ENCODE measurements at regions of chr4 and their contacts with region 1.

Region 1: DNA sequence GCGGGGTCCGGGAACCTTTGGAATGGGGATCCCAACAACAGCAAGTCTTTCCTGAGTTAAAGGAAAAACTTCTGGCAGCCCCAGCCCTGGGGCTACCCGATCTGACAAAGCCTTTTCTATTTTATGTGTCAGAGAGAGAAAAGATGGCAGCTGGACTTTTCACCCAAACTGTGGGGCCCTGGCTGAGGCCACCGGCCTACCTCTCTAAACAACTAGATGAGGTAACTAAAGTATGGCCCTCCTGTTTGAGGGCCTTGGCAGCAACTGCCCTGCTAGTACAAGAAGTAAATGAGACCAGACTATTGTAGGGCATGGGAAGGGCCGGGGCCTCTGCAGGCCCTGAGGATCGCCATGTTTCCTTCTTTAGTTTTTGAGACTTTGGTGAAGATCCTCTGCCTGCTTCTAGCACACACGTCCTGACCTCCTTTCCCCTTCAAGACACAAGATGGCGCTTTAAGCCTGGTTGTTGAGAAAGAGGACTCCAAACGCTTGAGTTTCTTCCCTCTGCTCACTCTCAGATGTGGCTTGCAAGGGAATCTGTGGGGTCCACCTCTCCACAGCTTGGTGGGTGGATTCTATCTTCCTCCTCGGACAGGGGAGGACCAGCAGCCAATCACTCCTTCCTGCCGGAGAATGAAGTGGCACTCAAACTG is 18.5 kb upstream of the DRD5 start:
- DNase-seq: peak; percentile 71
- ATAC-seq: peak; percentile 78
- H3K4me3 ChIP-seq: no peak overlapping the region; a peak in 1 of 6 replicates
- H3K27ac ChIP-seq: no peak overlapping the region
- H3K4me1 ChIP-seq: peaks cover 5% of the 10 kb centered on the region; the same call in 1 of the 2 replicates
- H3K27me3 ChIP-seq: no peaks in the 10 kb centered on the region; a peak in 1 of 5 replicates
- CTCF ChIP-seq: peak; percentile 85
- EP300 ChIP-seq: no peak
- POLR2A ChIP-seq: no peak
- RAD21 ChIP-seq: peak; percentile 51

Region 2: DNA sequence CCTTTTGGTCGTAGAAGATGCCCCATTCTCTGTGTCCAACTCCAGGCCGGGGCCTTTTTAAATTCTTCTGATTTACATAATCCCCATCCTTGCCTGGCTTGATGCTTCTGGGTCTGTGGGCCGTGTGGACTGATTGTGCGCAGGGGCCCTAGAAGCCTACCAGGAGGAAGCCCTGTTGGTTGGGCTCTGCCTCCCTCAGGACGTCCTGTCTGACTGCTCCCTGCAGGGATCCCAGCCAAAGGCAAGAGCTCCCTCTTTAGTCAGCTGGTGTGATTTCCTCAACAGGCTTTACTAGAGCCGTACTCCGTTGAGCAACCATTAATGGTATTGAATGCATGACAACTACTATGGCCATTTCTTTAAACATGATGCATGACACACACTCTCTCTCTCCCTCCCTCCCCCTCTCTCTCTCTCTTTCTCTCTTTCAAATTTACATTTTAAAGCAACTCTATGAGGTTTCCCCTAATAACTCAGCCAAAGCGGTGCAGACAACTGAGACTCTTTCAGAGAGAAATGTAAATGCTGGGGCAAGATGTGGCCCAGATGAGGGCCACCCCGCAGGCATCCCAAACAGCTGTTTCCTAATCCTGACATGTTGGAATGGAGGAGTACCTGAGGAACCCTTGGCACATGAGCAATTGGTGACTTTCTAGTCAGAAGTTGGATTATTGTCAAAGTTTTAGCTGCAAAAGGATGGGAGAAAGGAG is 135.8 kb after region 1 on chr4:
- CTCF ChIA-PET with region 1: interaction called, 4 read pairs
- POLR2A ChIA-PET with region 1: no interaction called
- in situ Hi-C with region 1: no loop called
- intact Hi-C with region 1: loop called (anchors 2 kb)
- DNase-seq: peak; percentile 11
- ATAC-seq: peak; percentile 70
- H3K4me3 ChIP-seq: no peak overlapping the region
- H3K27ac ChIP-seq: no peak overlapping the region
- H3K4me1 ChIP-seq: no peaks in the 10 kb centered on the region
- H3K27me3 ChIP-seq: no peaks in the 10 kb centered on the region
- CTCF ChIP-seq: peak; percentile 25; the same call in 1 of the 2 replicates
- EP300 ChIP-seq: no peak
- POLR2A ChIP-seq: no peak
- RAD21 ChIP-seq: no peak

Region 3: DNA sequence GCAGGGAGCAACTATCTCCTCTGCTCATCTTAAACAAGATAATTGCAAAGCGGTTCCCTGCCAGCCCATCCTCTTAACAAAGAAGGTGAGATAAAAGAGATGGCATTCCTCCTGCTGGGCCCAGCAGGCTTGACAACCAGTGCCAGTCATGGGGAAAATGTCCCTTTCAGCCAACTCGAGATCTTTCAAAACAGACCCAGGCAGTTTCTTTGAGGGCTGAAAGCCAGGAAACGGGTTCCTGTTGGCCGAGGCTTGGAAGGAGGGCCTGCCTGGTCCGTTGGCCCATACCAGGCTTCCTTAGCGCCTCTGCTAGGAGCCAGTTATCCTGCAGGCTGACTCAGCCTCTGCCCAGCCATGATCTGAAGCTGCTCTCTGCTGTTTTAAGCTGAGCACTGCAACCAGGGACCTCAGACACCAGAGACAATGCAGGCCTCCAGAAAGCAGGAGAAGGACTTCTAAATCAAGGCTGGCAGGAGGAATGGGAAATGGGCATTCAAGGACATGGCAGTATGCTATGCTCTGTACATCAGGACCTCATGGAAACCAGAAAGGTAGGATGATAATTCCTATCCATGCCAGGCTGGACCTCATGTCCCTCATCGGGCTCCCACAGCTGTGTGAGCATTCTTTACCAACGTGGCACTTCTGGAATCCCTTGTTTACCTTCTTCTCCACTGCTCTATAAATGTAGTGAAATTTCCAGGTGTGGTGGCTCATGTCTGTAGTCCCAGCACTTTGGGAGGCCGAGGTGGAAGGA is 300.8 kb after region 1 on chr4:
- CTCF ChIA-PET with region 1: no interaction called
- POLR2A ChIA-PET with region 1: no interaction called
- in situ Hi-C with region 1: loop called (anchors 5 kb)
- intact Hi-C with region 1: loop called (anchors 1 kb)
- DNase-seq: peak; percentile 67
- ATAC-seq: peak; percentile 99
- H3K4me3 ChIP-seq: no peak overlapping the region
- H3K27ac ChIP-seq: no peak overlapping the region
- H3K4me1 ChIP-seq: peaks cover 23% of the 10 kb centered on the region
- H3K27me3 ChIP-seq: no peaks in the 10 kb centered on the region
- CTCF ChIP-seq: peak; percentile 96
- EP300 ChIP-seq: no peak
- POLR2A ChIP-seq: no peak
- RAD21 ChIP-seq: peak; percentile 97

Region 4: GRCh38 chr4:10403633-10404445 is 640.9 kb after region 1 on chr4:
- CTCF ChIA-PET with region 1: interaction called, 4 read pairs
- POLR2A ChIA-PET with region 1: no interaction called
- in situ Hi-C with region 1: loop called (anchors 25 kb)
- intact Hi-C with region 1: no loop called
- DNase-seq: peak; percentile 29
- ATAC-seq: peak; percentile 65
- H3K4me3 ChIP-seq: no peak overlapping the region
- H3K27ac ChIP-seq: no peak overlapping the region
- H3K4me1 ChIP-seq: no peaks in the 10 kb centered on the region
- H3K27me3 ChIP-seq: no peaks in the 10 kb centered on the region
- CTCF ChIP-seq: peak; percentile 61
- EP300 ChIP-seq: no peak
- POLR2A ChIP-seq: no peak
- RAD21 ChIP-seq: no peak

Region 5: GRCh38 chr4:10554694-10555093 is 791.7 kb after region 1 on chr4:
- CTCF ChIA-PET with region 1: no interaction called
- POLR2A ChIA-PET with region 1: no interaction called
- in situ Hi-C with region 1: no loop called
- intact Hi-C with region 1: loop called (anchors 1 kb)
- DNase-seq: peak; percentile 38
- ATAC-seq: peak; percentile 77
- H3K4me3 ChIP-seq: no peak overlapping the region
- H3K27ac ChIP-seq: no peak overlapping the region
- H3K4me1 ChIP-seq: no peaks in the 10 kb centered on the region
- H3K27me3 ChIP-seq: no peaks in the 10 kb centered on the region
- CTCF ChIP-seq: peak; percentile 76
- EP300 ChIP-seq: no peak
- POLR2A ChIP-seq: no peak
- RAD21 ChIP-seq: 0 out of 2 replicates have a peak, but pooled peaks have one; percentile 29